ENCODE measurements at regions of chr2 and their contacts with region 1.

Region 1: GRCh38 chr2:195709901-195710806 is 53.1 kb downstream of the SLC39A10 start:
- DNase-seq: peak; percentile 42
- ATAC-seq: peak; percentile 91
- H3K4me3 ChIP-seq: no peak overlapping the region
- H3K27ac ChIP-seq: peak overlapping the region; percentile 47
- H3K4me1 ChIP-seq: peaks cover 15% of the 10 kb centered on the region
- H3K27me3 ChIP-seq: no peaks in the 10 kb centered on the region
- CTCF ChIP-seq: no peak

Region 2: DNA sequence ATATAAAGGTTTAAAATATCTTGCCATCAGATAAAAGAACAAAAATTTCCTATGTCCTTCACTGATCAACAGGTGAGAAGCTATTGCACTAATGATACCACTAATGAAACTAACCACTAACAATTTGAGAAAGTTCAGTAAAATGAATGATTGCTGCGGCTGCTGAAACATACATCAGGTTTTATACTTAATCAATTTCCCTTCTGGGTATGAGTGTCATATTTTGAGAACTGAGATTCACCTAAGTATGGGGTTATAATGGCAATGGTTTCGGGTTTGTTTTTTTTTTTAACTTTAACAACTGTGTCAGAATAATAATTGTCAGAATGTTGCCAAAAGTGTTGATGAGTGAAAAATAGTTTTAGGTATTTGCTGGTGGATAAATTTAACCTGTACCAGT is 204.5 kb before region 1 on chr2:
- CTCF ChIA-PET with region 1: no interaction called
- POLR2A ChIA-PET with region 1: no interaction called
- intact Hi-C with region 1: no loop called
- DNase-seq: no peak
- ATAC-seq: no peak
- H3K4me3 ChIP-seq: no peak overlapping the region
- H3K27ac ChIP-seq: no peak overlapping the region
- H3K4me1 ChIP-seq: 0 out of 2 replicates have a peak, but pooled peaks cover 7% of the 10 kb centered on the region
- H3K27me3 ChIP-seq: no peaks in the 10 kb centered on the region
- CTCF ChIP-seq: no peak

Region 3: GRCh38 chr2:195672668-195673067 is 37.5 kb before region 1 on chr2:
- CTCF ChIA-PET with region 1: no interaction called
- POLR2A ChIA-PET with region 1: no interaction called
- intact Hi-C with region 1: loop called (anchors 5 kb)
- DNase-seq: peak; percentile 24
- ATAC-seq: no peak
- H3K4me3 ChIP-seq: no peak overlapping the region
- H3K27ac ChIP-seq: no peak overlapping the region
- H3K4me1 ChIP-seq: peaks cover under 1% of the 10 kb centered on the region; the same call in 1 of the 2 replicates
- H3K27me3 ChIP-seq: no peaks in the 10 kb centered on the region
- CTCF ChIP-seq: peak; percentile 51

Measured in PC-3 (cell line).